ENCODE measurements at regions of chr17 and their contacts with region 1.

Region 1: GRCh38 chr17:29664743-29665480 is 42.2 kb upstream of the CORO6 start:
- DNase-seq: no peak
- H3K4me3 ChIP-seq: no peak overlapping the region
- H3K27ac ChIP-seq: peak overlapping the region; percentile 8
- H3K4me1 ChIP-seq: peaks cover 10% of the 10 kb centered on the region
- CTCF ChIP-seq: no peak

Region 2: DNA sequence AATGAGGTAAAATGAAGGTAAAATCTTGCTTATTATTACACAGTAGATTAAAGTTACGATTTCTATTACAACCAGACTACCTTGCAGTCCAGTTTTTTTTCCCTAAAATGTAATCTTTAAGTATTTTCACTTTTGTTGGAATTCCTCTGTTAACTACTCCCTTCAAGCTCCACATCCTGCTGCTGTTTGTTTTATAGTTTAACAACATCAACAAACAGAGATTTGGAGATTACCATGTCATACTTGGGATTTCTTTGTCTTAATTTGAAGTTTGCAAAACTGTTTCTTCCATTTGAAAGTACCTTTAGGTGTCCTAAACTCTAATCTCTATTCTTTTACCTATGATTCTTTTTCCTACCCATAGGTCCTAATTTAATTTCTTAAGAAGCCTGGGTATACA is 181.4 kb before region 1 on chr17:
- CTCF ChIA-PET with region 1: no interaction called
- POLR2A ChIA-PET with region 1: no interaction called
- intact Hi-C with region 1: no loop called
- DNase-seq: no peak
- H3K4me3 ChIP-seq: no peak overlapping the region
- H3K27ac ChIP-seq: no peak overlapping the region
- H3K4me1 ChIP-seq: no peaks in the 10 kb centered on the region
- CTCF ChIP-seq: no peak

Region 3: GRCh38 chr17:29682054-29682453 is 17.1 kb after region 1 on chr17:
- CTCF ChIA-PET with region 1: no interaction called
- POLR2A ChIA-PET with region 1: interaction called, 11 read pairs
- intact Hi-C with region 1: no loop called
- DNase-seq: peak; percentile 78
- H3K4me3 ChIP-seq: no peak overlapping the region
- H3K27ac ChIP-seq: peak overlapping the region; percentile 63
- H3K4me1 ChIP-seq: peaks cover 26% of the 10 kb centered on the region
- CTCF ChIP-seq: peak; percentile 63

Region 4: DNA sequence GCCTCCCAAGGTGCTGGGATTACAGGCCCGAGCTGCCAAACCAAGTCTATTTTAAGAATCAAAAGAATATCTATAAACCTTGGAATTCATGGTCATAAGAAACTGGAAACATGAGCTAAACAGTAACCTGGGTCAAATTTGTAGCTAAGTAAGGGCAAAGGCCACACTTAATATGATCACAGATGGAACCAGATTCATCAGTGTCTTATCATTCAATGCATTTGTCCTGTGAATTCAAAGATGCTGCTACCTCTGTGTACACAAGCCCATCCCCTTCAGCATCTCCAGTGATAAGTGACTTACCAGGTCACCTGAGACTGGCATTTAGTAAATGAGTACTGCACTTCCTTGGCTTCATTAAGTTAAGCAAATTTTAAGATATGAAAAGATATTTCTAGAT is 157.0 kb after region 1 on chr17:
- CTCF ChIA-PET with region 1: no interaction called
- POLR2A ChIA-PET with region 1: no interaction called
- intact Hi-C with region 1: no loop called
- DNase-seq: no peak
- H3K4me3 ChIP-seq: no peak overlapping the region
- H3K27ac ChIP-seq: no peak overlapping the region
- H3K4me1 ChIP-seq: no peaks in the 10 kb centered on the region
- CTCF ChIP-seq: no peak

Measured in OCI-LY7 (cell line).